ENCODE measurements at regions of chr3 and their contacts with region 1.

Region 1: GRCh38 chr3:141105828-141106628 is 54.9 kb downstream of the SPSB4 start:
- DNase-seq: peak; percentile 79 to 94
- H3K4me3 ChIP-seq: no peak overlapping the region
- H3K27ac ChIP-seq: no peak overlapping the region
- H3K4me1 ChIP-seq: no peaks in the 10 kb centered on the region
- H3K27me3 ChIP-seq: no peaks in the 10 kb centered on the region
- CTCF ChIP-seq: peak in 5 of 7 experiments; percentile 51 to 76 (median 63)
- EP300 ChIP-seq: no peak
- POLR2A ChIP-seq: no peak

Region 2: GRCh38 chr3:141011232-141011996 is 94.6 kb before region 1 on chr3:
- intact Hi-C with region 1: loop called (anchors 10 kb)
- DNase-seq: peak; percentile 78 to 91
- H3K4me3 ChIP-seq: no peak overlapping the region
- H3K27ac ChIP-seq: no peak overlapping the region
- H3K4me1 ChIP-seq: peaks cover 0 to 8% (median 0%) of the 10 kb centered on the region in 4 donors
- H3K27me3 ChIP-seq: peaks cover 0 to 3% (median 0%) of the 10 kb centered on the region in 3 donors
- CTCF ChIP-seq: peak in 5 of 7 experiments; percentile 42 to 65 (median 55)
- EP300 ChIP-seq: no peak
- POLR2A ChIP-seq: no peak

Region 3: DNA sequence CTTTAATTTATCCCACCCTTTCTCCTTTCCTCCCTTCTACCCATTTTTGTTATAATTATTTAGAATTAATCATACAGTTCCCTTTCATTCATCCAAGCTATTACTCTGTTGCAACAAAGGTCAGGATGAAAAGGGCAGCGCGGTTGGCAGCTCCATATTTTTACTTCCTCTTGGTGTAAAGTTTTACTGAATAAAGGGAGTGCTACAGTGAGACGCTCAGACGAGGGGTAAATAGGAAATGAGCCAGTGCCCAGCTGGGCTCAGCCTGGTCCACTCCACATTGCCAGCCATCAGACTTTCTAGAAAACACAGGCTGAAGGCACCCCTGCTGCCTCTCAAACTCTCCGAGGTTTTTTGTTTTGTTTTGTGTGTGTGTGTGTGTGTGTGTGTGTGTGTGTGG is 240.4 kb after region 1 on chr3:
- intact Hi-C with region 1: no loop called
- DNase-seq: peak in 1 of 2 donors; percentile 55
- H3K4me3 ChIP-seq: no peak overlapping the region
- H3K27ac ChIP-seq: no peak overlapping the region
- H3K4me1 ChIP-seq: peaks cover 0 to 9% (median 4%) of the 10 kb centered on the region in 4 donors
- H3K27me3 ChIP-seq: no peaks in the 10 kb centered on the region
- CTCF ChIP-seq: no peak
- EP300 ChIP-seq: no peak
- POLR2A ChIP-seq: no peak

Measured in stomach (tissue), 19 donors.